ENCODE measurements at regions of chr1 and their contacts with region 1.

Region 1: DNA sequence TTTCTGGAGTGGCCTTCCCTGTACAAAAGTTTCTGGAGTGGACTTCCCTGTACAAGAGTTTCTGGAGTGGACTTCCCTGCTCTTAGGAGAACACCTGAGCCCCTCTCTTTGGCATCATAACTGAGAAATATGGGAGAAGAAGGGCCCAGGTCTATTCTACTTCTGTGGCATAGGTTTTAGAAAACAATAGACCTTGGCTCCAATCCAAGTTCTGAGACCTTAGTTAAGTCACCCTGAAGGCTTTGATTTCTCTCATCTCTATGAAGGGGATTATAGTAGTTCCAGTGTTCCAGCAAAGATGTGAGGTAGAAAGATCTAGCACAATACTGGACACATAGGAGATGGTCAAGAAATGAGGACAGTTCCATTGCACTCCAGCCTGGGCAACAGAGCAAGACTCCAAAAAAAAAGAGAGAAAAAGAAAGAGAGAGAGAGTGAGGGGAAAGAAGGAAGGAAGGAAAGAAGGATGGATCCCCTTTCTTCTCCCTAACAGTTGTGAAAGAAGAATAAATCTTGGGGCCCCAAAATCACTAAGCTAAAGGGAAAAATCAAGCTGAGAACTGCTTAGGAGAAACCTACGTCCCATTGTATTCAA is 13.3 kb upstream of the EIF4G3 start:
- DNase-seq: no peak
- CTCF ChIP-seq: no peak

Region 2: GRCh38 chr1:20696397-20697329 is 493.3 kb before region 1 on chr1:
- in situ Hi-C with region 1: loop called (anchors 10 kb)
- DNase-seq: peak; percentile 93
- CTCF ChIP-seq: peak; percentile 91

Region 3: GRCh38 chr1:21564521-21565095 is 374.6 kb after region 1 on chr1:
- in situ Hi-C with region 1: no loop called
- DNase-seq: no peak
- CTCF ChIP-seq: no peak